CD4-positive, alpha-beta memory T cell (primary cell): ENCODE measurements at regions of chr3 and their contacts with region 1.

Region 1: GRCh38 chr3:157081681-157082210 is 78.2 kb downstream of the CCNL1 start:
- DNase-seq: peak; percentile 82 to 92 (median 83)
- H3K4me3 ChIP-seq: no peak overlapping the region
- H3K4me3 Mint-ChIP-seq: peak overlapping the region in 5 of 8 donors; percentile 11 to 39 (median 21)
- H3K27ac ChIP-seq: peak overlapping the region; percentile 55
- H3K27ac Mint-ChIP-seq: peak overlapping the region; percentile 85 to 96 (median 89)
- H3K4me1 ChIP-seq: peaks cover 20% of the 10 kb centered on the region
- H3K4me1 Mint-ChIP-seq: peaks cover 10 to 29% (median 17%) of the 10 kb centered on the region in 4 donors
- H3K27me3 ChIP-seq: no peaks in the 10 kb centered on the region
- H3K27me3 Mint-ChIP-seq: no peaks in the 10 kb centered on the region

Region 2: GRCh38 chr3:156040041-156040440 is 1041.7 kb before region 1 on chr3:
- CTCF ChIA-PET with region 1: no interaction called
- POLR2A ChIA-PET with region 1: no interaction called
- intact Hi-C with region 1: loop called (anchors 5 kb)
- DNase-seq: no peak
- H3K4me3 ChIP-seq: no peak overlapping the region
- H3K4me3 Mint-ChIP-seq: no peak overlapping the region
- H3K27ac ChIP-seq: no peak overlapping the region
- H3K27ac Mint-ChIP-seq: no peak overlapping the region
- H3K4me1 ChIP-seq: no peaks in the 10 kb centered on the region
- H3K4me1 Mint-ChIP-seq: peaks cover 0 to 2% (median under 1%) of the 10 kb centered on the region in 4 donors
- H3K27me3 ChIP-seq: no peaks in the 10 kb centered on the region
- H3K27me3 Mint-ChIP-seq: peaks cover 2 to 5% of the 10 kb centered on the region in 2 donors

Region 3: GRCh38 chr3:156681002-156681401 is 400.7 kb before region 1 on chr3:
- CTCF ChIA-PET with region 1: interaction called, 49 read pairs
- POLR2A ChIA-PET with region 1: interaction called, 94 read pairs
- intact Hi-C with region 1: no loop called
- DNase-seq: no peak
- H3K4me3 ChIP-seq: no peak overlapping the region
- H3K4me3 Mint-ChIP-seq: peak overlapping the region; percentile 65 to 73 (median 68)
- H3K27ac ChIP-seq: no peak overlapping the region
- H3K27ac Mint-ChIP-seq: peak overlapping the region in 6 of 7 donors; percentile 17 to 75 (median 62)
- H3K4me1 ChIP-seq: peaks cover 99% of the 10 kb centered on the region
- H3K4me1 Mint-ChIP-seq: peaks cover 64 to 93% (median 81%) of the 10 kb centered on the region in 4 donors
- H3K27me3 ChIP-seq: no peaks in the 10 kb centered on the region
- H3K27me3 Mint-ChIP-seq: no peaks in the 10 kb centered on the region

Region 4: DNA sequence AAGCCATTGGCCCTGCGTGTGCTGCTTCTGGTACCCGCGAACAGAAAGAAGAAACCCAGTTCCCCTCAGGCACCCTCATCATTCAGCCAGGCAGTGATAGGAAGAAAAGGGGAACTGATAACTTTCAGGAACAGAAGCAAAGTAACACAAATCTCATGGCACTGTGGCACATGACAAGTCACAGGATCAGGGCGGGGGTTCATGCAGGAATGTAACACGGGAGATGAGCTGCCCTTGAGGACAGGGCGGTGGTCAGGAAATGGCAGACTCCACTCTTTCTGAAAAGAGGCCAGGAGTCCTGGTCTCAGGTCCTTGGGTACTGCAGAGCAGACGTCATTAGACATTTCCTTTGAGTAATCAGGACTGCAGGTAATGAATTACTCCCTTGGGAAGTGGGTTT is 17.3 kb before region 1 on chr3:
- CTCF ChIA-PET with region 1: interaction called, 35 read pairs
- POLR2A ChIA-PET with region 1: interaction called, 12 read pairs
- intact Hi-C with region 1: loop called (anchors 1 kb)
- DNase-seq: no peak
- H3K4me3 ChIP-seq: no peak overlapping the region
- H3K4me3 Mint-ChIP-seq: no peak overlapping the region
- H3K27ac ChIP-seq: no peak overlapping the region
- H3K27ac Mint-ChIP-seq: peak overlapping the region in 3 of 7 donors; percentile 39 to 70 (median 42)
- H3K4me1 ChIP-seq: peaks cover 38% of the 10 kb centered on the region
- H3K4me1 Mint-ChIP-seq: peaks cover 23 to 45% (median 36%) of the 10 kb centered on the region in 4 donors
- H3K27me3 ChIP-seq: no peaks in the 10 kb centered on the region
- H3K27me3 Mint-ChIP-seq: peaks cover 0 to 2% of the 10 kb centered on the region in 2 donors

Region 5: DNA sequence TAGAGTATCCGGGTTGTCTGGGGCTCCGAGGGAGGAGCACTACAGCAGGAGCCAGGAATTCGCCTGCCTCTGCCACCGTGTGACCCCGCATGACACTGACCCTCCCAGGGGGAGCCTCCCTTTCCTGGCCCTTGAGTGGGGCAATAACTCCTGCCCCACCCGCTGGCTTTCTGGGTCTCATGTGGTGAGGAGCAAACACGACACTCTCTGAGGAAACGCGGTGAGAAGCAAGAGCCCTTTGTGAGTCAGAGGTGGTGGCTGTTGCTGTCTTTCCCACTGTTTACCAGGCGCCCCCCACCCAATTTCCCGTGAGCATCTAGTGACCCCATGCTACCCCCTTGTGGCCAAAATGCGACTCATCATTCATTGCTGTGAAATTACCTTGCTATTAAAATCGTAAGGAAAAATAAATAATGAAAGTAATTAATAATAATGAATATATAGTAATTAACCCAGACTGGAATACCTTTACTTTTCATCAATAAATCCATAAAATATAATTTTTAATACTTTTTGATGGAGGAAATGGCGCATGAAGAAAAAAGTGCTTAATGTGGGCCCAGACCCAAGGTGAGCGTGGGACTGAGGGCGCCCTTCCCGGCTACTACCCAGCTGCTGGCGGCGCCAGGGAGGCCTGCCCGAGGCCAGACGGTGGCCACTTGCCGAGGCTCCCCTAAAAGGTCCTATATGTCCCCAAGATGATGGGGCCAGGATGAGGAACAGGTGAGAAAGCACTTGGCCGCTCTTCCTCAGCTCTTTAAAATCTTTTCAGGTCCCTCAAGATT is 48.9 kb after region 1 on chr3:
- CTCF ChIA-PET with region 1: interaction called, 346 read pairs
- POLR2A ChIA-PET with region 1: interaction called, 17 read pairs
- intact Hi-C with region 1: no loop called
- DNase-seq: peak; percentile 81 to 94 (median 84)
- H3K4me3 ChIP-seq: peak overlapping the region; percentile 4 to 45
- H3K4me3 Mint-ChIP-seq: peak overlapping the region; percentile 50 to 91 (median 76)
- H3K27ac ChIP-seq: peak overlapping the region; percentile 83
- H3K27ac Mint-ChIP-seq: peak overlapping the region; percentile 95 to 99 (median 97)
- H3K4me1 ChIP-seq: peaks cover 73% of the 10 kb centered on the region
- H3K4me1 Mint-ChIP-seq: peaks cover 48 to 86% (median 66%) of the 10 kb centered on the region in 4 donors
- H3K27me3 ChIP-seq: no peaks in the 10 kb centered on the region
- H3K27me3 Mint-ChIP-seq: no peaks in the 10 kb centered on the region

Region 6: DNA sequence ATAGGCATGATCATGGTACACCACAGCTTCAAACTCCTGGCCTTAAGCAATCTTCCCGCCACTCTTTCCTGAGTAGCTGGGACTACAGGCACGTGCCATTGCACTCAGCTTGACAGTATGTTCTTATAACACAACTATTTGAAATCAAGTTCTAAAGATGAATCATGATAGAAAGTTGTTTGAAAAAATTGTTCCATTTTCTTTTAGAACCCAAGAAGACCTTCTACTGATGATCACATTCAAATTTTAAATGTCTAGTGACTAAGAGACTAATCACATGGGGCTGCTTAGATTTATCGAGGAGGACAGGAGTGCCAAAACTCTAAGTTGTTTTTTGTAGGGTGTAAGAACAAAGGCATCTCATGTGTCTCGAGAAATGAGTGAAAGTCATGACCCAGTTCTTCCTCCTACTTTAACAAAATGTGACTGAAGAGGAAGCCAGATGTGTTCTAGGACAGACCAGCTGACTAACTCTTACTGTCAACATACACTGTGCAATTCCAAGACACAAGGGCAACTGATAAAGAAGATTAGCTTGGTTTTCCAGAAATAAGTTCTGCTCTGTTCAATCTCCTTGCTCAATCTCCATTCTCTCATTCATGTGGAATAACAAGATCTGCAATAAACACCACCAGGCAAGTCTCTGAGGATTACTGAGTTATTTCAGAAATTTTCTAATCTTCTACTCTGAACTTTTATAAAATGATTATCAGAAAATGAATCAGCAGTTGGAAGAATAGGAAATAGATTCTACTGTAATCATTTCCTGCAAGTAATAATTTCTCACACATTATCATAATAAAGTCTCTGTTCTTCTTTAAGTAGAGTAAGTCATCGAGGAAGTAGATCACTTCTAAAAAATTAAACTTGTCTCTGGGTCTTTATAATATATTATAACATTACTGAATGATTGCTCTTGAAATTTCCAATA is 200.8 kb after region 1 on chr3:
- CTCF ChIA-PET with region 1: no interaction called
- POLR2A ChIA-PET with region 1: no interaction called
- intact Hi-C with region 1: no loop called
- DNase-seq: no peak
- H3K4me3 ChIP-seq: no peak overlapping the region
- H3K4me3 Mint-ChIP-seq: no peak overlapping the region
- H3K27ac ChIP-seq: no peak overlapping the region
- H3K27ac Mint-ChIP-seq: no peak overlapping the region
- H3K4me1 ChIP-seq: no peaks in the 10 kb centered on the region
- H3K4me1 Mint-ChIP-seq: peaks cover 0 to 2% (median 0%) of the 10 kb centered on the region in 4 donors
- H3K27me3 ChIP-seq: no peaks in the 10 kb centered on the region
- H3K27me3 Mint-ChIP-seq: no peaks in the 10 kb centered on the region